ENCODE measurements at regions of chr1 and their contacts with region 1.

Region 1: GRCh38 chr1:53929246-53929960 is 16.1 kb downstream of the IFT25 start:
- DNase-seq: no peak
- H3K4me3 ChIP-seq: no peak overlapping the region
- H3K27ac ChIP-seq: no peak overlapping the region
- H3K4me1 ChIP-seq: no peaks in the 10 kb centered on the region
- H3K27me3 ChIP-seq: no peaks in the 10 kb centered on the region
- CTCF ChIP-seq: no peak

Region 2: GRCh38 chr1:53669637-53670191 is 259.7 kb before region 1 on chr1:
- CTCF ChIA-PET with region 1: no interaction called
- dilution Hi-C with region 1: no loop called
- in situ Hi-C with region 1: no loop called
- intact Hi-C with region 1: no loop called
- DNase-seq: no peak
- H3K4me3 ChIP-seq: no peak overlapping the region
- H3K27ac ChIP-seq: no peak overlapping the region
- H3K4me1 ChIP-seq: no peaks in the 10 kb centered on the region
- H3K27me3 ChIP-seq: no peaks in the 10 kb centered on the region
- CTCF ChIP-seq: no peak

Region 3: DNA sequence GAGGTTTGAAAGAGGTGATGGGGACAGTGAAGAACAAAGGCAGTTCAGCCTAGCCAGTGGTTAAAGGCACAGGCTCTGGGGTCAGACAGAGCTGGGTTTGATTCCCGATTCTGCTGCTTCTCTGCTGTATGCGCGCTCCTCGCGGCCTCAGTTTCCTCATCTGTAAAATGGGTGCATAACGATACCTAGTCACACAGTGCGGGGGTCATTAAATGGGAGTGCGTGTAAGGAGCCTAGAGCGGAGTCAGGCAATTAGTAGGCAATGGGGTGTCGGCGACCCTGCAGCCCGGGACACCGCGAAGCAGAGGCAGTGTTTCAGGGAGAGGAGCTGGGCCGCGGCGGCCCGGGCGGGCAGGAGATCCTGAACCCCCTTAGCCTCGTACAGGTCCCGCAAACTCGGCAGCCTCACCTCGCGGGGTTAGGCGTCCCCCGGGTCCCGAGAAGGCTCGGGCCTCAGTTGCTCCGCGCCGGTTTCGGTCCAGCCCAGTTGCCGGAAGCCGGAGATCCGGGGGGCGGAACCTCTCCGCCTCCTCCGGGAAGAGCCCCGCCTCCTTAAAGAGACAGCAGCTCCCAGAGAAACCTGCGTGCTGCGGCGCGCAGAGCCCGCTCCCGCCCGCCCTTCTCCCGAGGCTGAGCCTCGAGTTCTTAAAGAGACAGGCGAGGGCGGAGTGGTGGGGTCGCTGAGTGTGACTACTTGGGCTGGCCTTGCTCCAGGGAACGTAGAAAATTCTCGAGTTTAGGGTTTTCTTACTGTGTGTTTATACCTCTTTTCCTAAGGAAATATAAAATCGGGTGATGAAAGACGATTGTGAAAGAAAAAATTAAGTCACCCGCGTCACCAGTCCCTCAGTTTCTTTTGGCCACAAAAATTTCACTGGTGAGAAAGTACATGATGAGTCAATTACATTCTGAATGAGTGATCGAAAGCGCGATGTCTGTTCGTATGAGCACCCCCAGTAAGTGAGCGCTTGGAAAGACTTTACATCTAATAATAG is 39.8 kb before region 1 on chr1 and contains the start of gene YIPF1:
- CTCF ChIA-PET with region 1: no interaction called
- dilution Hi-C with region 1: loop called (anchors 5 kb)
- in situ Hi-C with region 1: no loop called
- intact Hi-C with region 1: no loop called
- DNase-seq: peak; percentile 91
- H3K4me3 ChIP-seq: peak within 1 kb of the TSS; percentile 78 to 90 (median 79)
- H3K27ac ChIP-seq: peak within 1 kb of the TSS; percentile 90
- H3K4me1 ChIP-seq: peaks cover 15% of the 10 kb centered on the region
- H3K27me3 ChIP-seq: no peaks in the 10 kb centered on the region
- CTCF ChIP-seq: no peak
- total RNA-seq, gene YIPF1: 21.6 to 24.8 TPM

Region 4: DNA sequence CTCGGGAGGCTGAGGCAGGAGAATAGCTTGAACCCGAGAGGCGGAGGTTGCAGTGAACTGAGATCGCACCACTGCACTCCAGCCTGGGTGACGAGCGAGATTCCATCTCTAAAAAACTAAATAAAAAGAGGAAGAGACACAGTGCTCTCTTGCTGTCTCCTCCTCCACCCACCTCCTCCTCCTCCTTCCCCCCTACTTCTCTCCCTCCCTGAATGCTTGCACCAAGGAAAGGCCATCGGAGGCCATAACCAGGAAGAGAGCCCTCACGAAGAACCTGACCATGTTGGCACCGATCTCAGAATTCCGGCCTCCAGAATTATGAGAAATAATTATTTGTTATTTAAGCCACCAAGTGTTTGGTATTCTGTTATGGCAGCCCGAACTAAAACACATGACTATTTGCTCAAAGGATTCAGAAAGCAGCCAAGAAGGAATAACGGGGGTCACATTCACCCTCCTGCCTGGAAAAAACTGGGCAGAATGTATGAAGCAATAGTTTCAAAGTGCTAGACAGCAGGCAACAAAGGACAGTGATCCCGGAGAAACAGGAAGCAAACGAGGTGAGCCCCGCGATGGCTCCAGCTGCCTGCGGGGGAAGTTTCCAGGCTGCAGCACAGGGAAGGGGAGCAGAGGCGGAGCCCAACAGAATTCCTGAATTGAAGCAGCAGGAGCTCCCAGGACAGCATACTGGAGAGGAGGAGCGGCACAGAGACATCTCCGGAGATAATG is 52.8 kb after region 1 on chr1:
- CTCF ChIA-PET with region 1: no interaction called
- dilution Hi-C with region 1: no loop called
- in situ Hi-C with region 1: no loop called
- intact Hi-C with region 1: no loop called
- DNase-seq: peak; percentile 14
- H3K4me3 ChIP-seq: peak overlapping the region in 2 of 3 experiments; percentile 3 to 4
- H3K27ac ChIP-seq: no peak overlapping the region
- H3K4me1 ChIP-seq: peaks cover 6% of the 10 kb centered on the region
- H3K27me3 ChIP-seq: no peaks in the 10 kb centered on the region
- CTCF ChIP-seq: no peak

Measured in mammary epithelial cell (primary cell).